Activated B cell treated with CpG ODN at 0.5 μM for 24 hours (primary cell): ENCODE measurements at regions of chr5 and their contacts with region 1.

Region 1: GRCh38 chr5:122985954-122986721 is 50.4 kb downstream of the PPIC start:
- DNase-seq: no peak
- ATAC-seq: peak; percentile 75
- H3K4me3 Mint-ChIP-seq: peak overlapping the region; percentile 12
- H3K27ac Mint-ChIP-seq: no peak overlapping the region
- H3K4me1 Mint-ChIP-seq: peaks cover 14% of the 10 kb centered on the region
- H3K27me3 Mint-ChIP-seq: no peaks in the 10 kb centered on the region
- CTCF ChIP-seq: no peak

Region 2: DNA sequence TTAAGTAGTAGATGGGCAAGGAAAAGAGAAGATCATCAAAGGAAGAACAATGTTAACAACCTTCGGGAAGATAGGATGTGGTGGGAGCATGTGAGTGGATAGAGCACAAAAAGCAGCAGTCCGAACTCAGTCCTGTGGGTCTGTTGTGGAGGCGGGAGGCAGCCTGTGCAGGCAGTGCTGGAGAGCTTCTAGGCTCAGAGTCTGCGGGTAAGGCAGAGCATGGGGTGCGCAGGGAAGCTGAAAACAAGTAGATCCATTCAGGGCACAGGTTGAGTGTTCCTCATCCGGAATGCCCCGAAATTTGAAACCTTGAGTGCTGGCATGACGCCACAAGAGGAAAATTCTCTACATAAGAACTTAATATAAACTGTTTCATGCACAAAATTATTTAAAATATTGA is 34.5 kb before region 1 on chr5:
- CTCF ChIA-PET with region 1: no interaction called
- POLR2A ChIA-PET with region 1: no interaction called
- intact Hi-C with region 1: no loop called
- DNase-seq: no peak
- ATAC-seq: no peak
- H3K4me3 Mint-ChIP-seq: no peak overlapping the region
- H3K27ac Mint-ChIP-seq: no peak overlapping the region
- H3K4me1 Mint-ChIP-seq: peaks cover 9% of the 10 kb centered on the region
- H3K27me3 Mint-ChIP-seq: no peaks in the 10 kb centered on the region
- CTCF ChIP-seq: no peak

Region 3: DNA sequence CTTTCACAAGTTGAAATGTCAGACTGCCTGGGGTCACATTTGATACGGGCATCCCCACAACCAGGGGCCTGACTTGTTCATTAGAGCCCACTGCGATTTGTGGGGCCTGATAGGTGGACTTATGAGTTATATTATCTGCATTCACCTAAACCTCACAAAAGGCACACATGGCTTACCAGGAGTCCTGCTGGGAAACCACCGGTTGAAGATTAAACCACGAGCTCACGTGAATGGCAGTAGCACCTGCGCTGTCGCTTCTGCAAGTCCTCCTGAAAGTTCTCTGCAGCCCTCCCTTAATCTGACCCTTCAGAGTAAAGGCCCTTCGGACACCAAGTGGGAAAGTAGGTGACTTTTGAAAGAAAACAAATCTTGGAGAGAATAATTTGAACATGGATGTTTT is 18.5 kb before region 1 on chr5:
- CTCF ChIA-PET with region 1: no interaction called
- POLR2A ChIA-PET with region 1: no interaction called
- intact Hi-C with region 1: loop called (anchors 2 kb)
- DNase-seq: no peak
- ATAC-seq: peak; percentile 84
- H3K4me3 Mint-ChIP-seq: no peak overlapping the region
- H3K27ac Mint-ChIP-seq: peak overlapping the region; percentile 57
- H3K4me1 Mint-ChIP-seq: peaks cover 13% of the 10 kb centered on the region
- H3K27me3 Mint-ChIP-seq: no peaks in the 10 kb centered on the region
- CTCF ChIP-seq: no peak

Region 4: GRCh38 chr5:123036391-123037103 is 50.4 kb after region 1 on chr5 and contains the start of gene PPIC:
- CTCF ChIA-PET with region 1: no interaction called
- POLR2A ChIA-PET with region 1: no interaction called
- intact Hi-C with region 1: no loop called
- DNase-seq: peak; percentile 38
- ATAC-seq: peak; percentile 60
- H3K4me3 Mint-ChIP-seq: peak within 1 kb of the TSS; percentile 83
- H3K27ac Mint-ChIP-seq: no peak within 1 kb of the TSS
- H3K4me1 Mint-ChIP-seq: peaks cover 13% of the 10 kb centered on the region
- H3K27me3 Mint-ChIP-seq: peaks cover 58% of the 10 kb centered on the region
- CTCF ChIP-seq: no peak
- total RNA-seq, gene PPIC: not detected in 2 replicates